Activated T-helper 1 cell treated with anti-CD3 and anti-CD28 coated beads, Interleukin-12 subunit alpha, Interleukin-12 subunit beta, Interleukin-2, Interleukin-4 antibody, amounts not matched to agents 30 ng/mL and 10 ng/mL and 1 ng/mL, durations not matched to agents 14 hours and 24 hours and 36 hours (primary cell): ENCODE measurements at regions of chr10 and their contacts with region 1.

Region 1: GRCh38 chr10:61903221-61903927 is 1.9 kb downstream of the ARID5B start:
- DNase-seq: peak; percentile 69
- H3K4me3 Mint-ChIP-seq: peak overlapping the region; percentile 97
- H3K27ac Mint-ChIP-seq: peak overlapping the region; percentile 95
- H3K4me1 Mint-ChIP-seq: peaks cover 60% of the 10 kb centered on the region
- H3K27me3 Mint-ChIP-seq: no peaks in the 10 kb centered on the region

Region 2: DNA sequence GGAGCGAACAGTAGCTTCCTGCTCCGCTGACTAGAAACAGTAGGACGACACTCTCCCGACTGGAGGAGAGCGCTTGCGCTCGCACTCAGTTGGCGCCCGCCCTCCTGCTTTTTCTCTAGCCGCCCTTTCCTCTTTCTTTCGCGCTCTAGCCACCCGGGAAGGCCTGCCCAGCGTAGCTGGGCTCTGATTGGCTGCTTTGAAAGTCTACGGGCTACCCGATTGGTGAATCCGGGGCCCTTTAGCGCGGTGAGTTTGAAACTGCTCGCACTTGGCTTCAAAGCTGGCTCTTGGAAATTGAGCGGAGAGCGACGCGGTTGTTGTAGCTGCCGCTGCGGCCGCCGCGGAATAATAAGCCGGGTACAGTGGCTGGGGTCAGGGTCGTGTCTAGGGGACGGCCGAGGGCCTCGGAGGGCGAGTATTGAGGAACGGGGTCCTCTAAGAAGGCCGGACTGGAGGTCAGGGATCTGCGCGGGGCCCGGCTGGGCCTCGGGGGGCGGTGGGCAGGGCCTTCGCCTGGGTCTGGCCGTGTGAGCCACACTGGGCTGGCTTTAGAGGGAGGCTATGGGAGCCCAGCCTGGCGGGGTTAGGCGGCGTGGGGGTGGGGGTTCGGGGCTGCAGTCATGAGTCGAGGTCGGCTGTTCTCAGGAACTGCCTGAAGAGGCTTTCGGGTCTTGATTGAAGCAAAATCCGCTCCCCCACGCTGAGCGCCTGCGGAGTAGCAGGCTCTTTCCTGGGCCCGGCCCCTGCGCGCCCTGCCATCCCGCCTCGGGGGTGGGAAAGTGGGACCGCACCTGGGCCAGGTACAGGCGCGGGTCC is 1125.0 kb before region 1 on chr10 and contains the start of gene CDK1:
- intact Hi-C with region 1: loop called (anchors 5 kb)
- DNase-seq: peak; percentile 97
- H3K4me3 Mint-ChIP-seq: peak within 1 kb of the TSS; percentile 99
- H3K27ac Mint-ChIP-seq: peak within 1 kb of the TSS; percentile 97
- H3K4me1 Mint-ChIP-seq: peaks cover 35% of the 10 kb centered on the region
- H3K27me3 Mint-ChIP-seq: peaks cover 2% of the 10 kb centered on the region
- total RNA-seq, gene CDK1: 100 and 104 TPM in 2 replicates

Region 3: DNA sequence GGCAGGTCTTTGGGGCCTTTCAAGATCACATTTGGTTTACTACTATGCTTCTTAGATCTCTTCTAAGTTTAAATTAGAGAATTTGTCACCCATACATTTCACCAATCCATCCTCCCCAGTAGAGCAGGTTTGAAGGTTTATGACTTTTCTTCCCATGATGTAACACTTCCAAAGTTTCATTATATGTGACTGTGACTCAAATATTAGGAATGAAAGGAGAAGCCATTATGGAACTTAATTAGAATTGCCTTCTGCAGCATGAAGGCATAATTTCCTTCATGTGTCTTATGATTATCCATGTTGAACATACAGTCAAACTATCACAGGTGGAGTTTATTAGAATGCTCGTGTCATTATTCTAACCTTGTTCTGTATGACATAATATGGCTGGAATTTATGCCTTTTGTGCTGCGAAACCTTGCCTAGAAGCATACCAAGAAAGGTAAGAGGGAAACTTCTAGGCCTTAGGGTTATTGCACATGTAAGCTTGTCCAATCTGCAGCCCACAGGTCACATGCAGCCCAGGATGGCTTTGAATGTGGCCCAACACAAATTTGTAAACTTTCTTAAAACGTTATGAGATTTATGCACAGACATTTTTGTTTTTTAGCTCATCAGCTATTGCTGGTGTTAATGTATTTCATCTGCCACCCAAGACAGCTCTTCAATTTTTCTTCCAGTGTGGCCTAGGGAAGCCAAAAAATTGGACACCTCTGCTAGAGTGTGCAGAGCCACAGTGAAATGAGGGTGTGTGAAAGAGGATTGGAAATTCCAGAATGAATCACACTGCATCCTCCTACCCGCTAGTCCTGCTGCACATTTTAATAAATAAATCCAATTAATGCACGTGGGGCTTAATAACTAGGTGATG is 583.8 kb before region 1 on chr10:
- intact Hi-C with region 1: no loop called
- DNase-seq: no peak
- H3K4me3 Mint-ChIP-seq: no peak overlapping the region
- H3K27ac Mint-ChIP-seq: no peak overlapping the region
- H3K4me1 Mint-ChIP-seq: no peaks in the 10 kb centered on the region
- H3K27me3 Mint-ChIP-seq: peaks cover 2% of the 10 kb centered on the region

Region 4: GRCh38 chr10:61701055-61701705 is 202.2 kb before region 1 on chr10:
- intact Hi-C with region 1: no loop called
- DNase-seq: no peak
- H3K4me3 Mint-ChIP-seq: no peak overlapping the region
- H3K27ac Mint-ChIP-seq: no peak overlapping the region
- H3K4me1 Mint-ChIP-seq: no peaks in the 10 kb centered on the region
- H3K27me3 Mint-ChIP-seq: peaks cover 9% of the 10 kb centered on the region

Region 5: DNA sequence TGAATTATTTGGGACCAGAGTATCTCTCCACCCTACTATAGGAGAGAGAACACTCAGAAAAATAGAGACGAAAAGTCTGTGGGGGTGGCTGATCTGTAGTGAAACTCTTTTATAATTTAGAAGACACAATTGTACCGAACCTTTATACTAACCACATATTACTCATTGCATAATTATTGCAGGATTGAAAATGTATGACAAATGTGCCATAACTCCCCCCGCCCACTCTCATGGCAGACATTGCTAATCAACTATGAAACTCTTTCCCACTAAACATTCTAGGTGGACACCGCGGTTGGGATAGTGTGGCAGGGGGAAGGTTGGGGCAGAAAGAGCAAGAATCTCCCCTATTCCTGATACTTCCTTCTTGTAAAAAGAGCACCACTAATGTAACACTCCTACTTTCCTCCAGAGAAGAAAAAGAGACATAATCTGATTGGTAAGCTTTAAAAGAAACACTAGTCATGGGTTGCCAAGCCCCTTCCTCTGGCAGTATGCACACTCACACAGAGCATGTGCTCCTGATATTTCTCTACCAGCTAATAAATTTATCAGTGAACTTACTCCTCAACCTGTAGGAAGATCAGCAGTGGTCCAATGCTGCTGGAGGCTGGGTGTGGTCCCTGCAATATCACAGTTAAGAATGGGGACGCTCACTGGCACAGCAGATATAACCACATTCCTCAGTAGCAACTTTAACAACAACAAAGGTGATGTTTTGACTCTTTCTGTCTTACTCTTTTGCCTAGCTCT is 20.6 kb before region 1 on chr10:
- intact Hi-C with region 1: loop called (anchors 1 kb)
- DNase-seq: no peak
- H3K4me3 Mint-ChIP-seq: no peak overlapping the region
- H3K27ac Mint-ChIP-seq: peak overlapping the region; percentile 44
- H3K4me1 Mint-ChIP-seq: peaks cover 19% of the 10 kb centered on the region
- H3K27me3 Mint-ChIP-seq: peaks cover 1% of the 10 kb centered on the region

Region 6: DNA sequence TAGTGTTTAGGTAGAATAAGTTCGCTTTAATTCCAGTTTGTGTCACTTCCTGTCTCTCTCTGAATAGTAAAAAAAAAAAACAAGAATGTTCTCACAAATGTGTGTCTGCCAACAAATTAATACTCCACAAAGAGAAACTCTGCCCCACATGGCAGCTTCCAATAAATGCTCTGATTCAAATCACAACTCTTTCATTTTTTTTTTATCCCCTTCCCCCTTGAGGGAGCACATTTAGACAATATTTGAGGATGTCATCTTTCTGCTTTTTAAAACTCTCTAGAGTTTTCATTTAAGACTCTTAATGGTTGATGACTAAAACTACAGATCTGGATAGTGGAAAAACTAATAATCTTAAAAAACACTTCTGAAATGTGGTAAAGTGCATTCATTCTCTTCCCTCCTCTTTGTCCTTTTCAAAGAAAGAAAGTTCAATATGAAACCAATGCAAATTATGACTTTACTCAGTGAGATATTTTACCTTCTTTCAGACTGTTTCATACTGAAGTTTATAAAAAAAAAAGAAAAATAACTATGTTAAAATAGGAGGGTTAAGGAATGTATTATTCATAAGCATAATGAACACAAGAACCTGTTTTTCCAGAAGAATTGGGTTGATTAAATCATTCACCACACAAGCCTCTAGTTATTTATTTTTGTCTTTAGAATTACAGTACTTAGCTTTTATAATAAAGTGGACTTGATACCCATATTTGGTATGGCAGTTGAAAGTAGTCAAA is 40.5 kb after region 1 on chr10:
- intact Hi-C with region 1: loop called (anchors 1 kb)
- DNase-seq: no peak
- H3K4me3 Mint-ChIP-seq: peak overlapping the region; percentile 77
- H3K27ac Mint-ChIP-seq: peak overlapping the region; percentile 95
- H3K4me1 Mint-ChIP-seq: peaks cover 58% of the 10 kb centered on the region
- H3K27me3 Mint-ChIP-seq: no peaks in the 10 kb centered on the region

Region 7: DNA sequence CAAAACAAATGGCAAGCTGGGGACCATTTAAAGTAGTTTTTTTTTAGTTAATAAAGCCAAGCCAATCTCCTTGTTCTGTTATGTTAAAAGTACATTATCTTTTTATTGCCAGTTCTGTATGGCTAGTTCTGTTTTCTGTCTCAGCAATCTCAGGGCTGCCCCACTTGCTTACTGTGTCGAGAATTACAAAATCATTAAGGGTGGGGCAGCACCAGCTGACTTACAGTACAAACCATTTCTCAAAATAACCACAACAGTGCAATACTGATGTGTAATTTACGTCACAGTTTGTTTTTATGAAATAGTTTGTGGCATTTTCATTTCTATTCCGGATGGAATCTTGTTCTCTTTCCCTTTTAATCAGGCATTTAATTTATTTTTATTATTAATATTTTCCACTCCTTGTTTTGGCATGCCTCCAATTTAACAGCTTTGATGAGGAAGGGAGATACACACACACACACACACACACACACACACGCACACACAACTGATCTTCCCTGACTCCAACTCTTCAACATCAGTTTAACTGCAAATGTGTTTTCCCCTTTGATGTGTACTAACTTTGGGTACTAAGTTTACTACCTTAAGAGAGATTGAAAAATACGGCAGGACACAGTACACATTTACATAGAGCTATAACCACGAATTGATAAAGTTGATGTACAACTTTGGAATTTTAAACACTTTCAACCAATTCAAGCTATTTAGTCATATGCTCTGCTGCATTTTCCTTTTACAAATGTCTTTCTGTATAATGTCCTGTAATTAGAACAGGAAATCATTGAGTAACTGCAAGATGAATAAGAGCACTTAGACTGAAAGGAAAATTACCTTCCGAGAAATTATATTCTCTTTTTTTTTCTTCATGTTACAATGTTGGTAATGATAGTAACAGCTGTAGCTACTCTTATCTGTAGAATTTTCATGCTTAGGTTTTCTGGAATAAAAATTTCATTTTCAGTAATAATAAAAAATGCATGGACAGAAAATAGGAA is 89.6 kb after region 1 on chr10:
- intact Hi-C with region 1: loop called (anchors 1 kb)
- DNase-seq: peak; percentile 69
- H3K4me3 Mint-ChIP-seq: peak overlapping the region; percentile 76
- H3K27ac Mint-ChIP-seq: peak overlapping the region; percentile 90
- H3K4me1 Mint-ChIP-seq: peaks cover 86% of the 10 kb centered on the region
- H3K27me3 Mint-ChIP-seq: no peaks in the 10 kb centered on the region

Region 8: GRCh38 chr10:62268399-62269114 is 365.2 kb after region 1 on chr10 and contains the start of gene RTKN2:
- intact Hi-C with region 1: loop called (anchors 2 kb)
- DNase-seq: peak; percentile 75
- H3K4me3 Mint-ChIP-seq: peak within 1 kb of the TSS; percentile 83
- H3K27ac Mint-ChIP-seq: no peak within 1 kb of the TSS
- H3K4me1 Mint-ChIP-seq: peaks cover 32% of the 10 kb centered on the region
- H3K27me3 Mint-ChIP-seq: peaks cover 27% of the 10 kb centered on the region
- total RNA-seq, gene RTKN2: 3.0 and 3.7 TPM in 2 replicates